CD4-positive, alpha-beta memory T cell (primary cell): ENCODE measurements at regions of chr17 and their contacts with region 1.

Region 1: GRCh38 chr17:74873038-74873873 is 462 bp upstream of the FDXR start:
- DNase-seq: peak; percentile 97 to 100 (median 99)
- H3K4me3 ChIP-seq: peak overlapping the region; percentile 79 to 84
- H3K4me3 Mint-ChIP-seq: peak overlapping the region; percentile 87 to 98 (median 94)
- H3K27ac ChIP-seq: peak overlapping the region; percentile 90
- H3K27ac Mint-ChIP-seq: peak overlapping the region; percentile 90 to 98 (median 98)
- H3K4me1 ChIP-seq: peaks cover 22% of the 10 kb centered on the region
- H3K4me1 Mint-ChIP-seq: peaks cover 10 to 27% (median 17%) of the 10 kb centered on the region in 4 donors
- H3K27me3 ChIP-seq: no peaks in the 10 kb centered on the region
- H3K27me3 Mint-ChIP-seq: no peaks in the 10 kb centered on the region

Region 2: GRCh38 chr17:74742153-74742515 is 131.1 kb before region 1 on chr17:
- CTCF ChIA-PET with region 1: interaction called, 6 read pairs
- POLR2A ChIA-PET with region 1: interaction called, 20 read pairs
- intact Hi-C with region 1: no loop called
- DNase-seq: peak in 4 of 5 donors; percentile 46 to 58 (median 57)
- H3K4me3 ChIP-seq: peak overlapping the region; percentile 20 to 30
- H3K4me3 Mint-ChIP-seq: peak overlapping the region; percentile 72 to 91 (median 79)
- H3K27ac ChIP-seq: peak overlapping the region; percentile 49
- H3K27ac Mint-ChIP-seq: peak overlapping the region in 6 of 7 donors; percentile 88 to 96 (median 90)
- H3K4me1 ChIP-seq: peaks cover 95% of the 10 kb centered on the region
- H3K4me1 Mint-ChIP-seq: peaks cover 54 to 95% (median 75%) of the 10 kb centered on the region in 4 donors
- H3K27me3 ChIP-seq: no peaks in the 10 kb centered on the region
- H3K27me3 Mint-ChIP-seq: no peaks in the 10 kb centered on the region

Region 3: DNA sequence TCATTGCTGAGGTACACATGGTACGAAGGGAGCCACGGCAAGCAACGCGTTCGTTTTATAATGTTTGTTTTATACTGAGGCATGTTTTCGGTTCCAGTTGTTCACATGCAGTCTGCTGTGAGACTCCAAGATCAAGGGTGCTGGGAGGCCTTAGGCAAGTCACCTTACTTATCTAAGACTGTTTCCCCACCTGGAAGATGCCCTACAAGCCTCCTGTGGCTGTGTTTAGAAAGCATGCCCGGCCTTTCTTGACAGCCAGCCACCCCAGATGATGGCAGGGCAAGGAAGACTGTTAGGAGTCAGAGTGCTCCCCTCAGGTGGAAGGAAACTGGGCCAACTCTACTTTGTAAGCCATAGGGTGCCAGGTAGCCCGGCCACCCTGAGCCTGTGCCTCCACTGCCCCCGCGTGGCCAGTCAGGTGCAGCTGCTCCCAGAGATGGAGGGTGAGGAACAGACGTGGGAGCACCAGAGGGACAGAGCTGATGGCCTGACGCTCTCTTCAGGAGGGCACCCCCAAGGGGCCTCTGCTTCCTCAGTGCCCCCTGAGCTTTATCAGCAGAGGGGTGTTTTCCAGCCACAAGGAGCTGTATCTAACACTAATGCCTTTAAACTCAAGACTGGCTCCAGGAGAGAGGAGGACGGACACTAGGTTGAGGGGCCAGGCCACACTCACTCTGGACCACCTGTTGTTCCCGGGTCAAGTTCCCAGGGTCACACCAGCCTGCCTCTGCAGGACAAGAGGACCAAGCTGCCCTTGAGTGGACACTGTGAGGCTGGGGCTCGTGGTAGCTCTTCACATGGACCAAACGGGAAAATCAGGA is 102.5 kb before region 1 on chr17:
- CTCF ChIA-PET with region 1: interaction called, 8 read pairs
- POLR2A ChIA-PET with region 1: interaction called, 12 read pairs
- intact Hi-C with region 1: no loop called
- DNase-seq: peak; percentile 79
- H3K4me3 ChIP-seq: no peak overlapping the region
- H3K4me3 Mint-ChIP-seq: peak overlapping the region in 3 of 8 donors; percentile 20 to 46 (median 24)
- H3K27ac ChIP-seq: peak overlapping the region; percentile 46
- H3K27ac Mint-ChIP-seq: peak overlapping the region; percentile 64 to 92 (median 89)
- H3K4me1 ChIP-seq: peaks cover 31% of the 10 kb centered on the region
- H3K4me1 Mint-ChIP-seq: peaks cover 21 to 67% (median 39%) of the 10 kb centered on the region in 4 donors
- H3K27me3 ChIP-seq: no peaks in the 10 kb centered on the region
- H3K27me3 Mint-ChIP-seq: no peaks in the 10 kb centered on the region

Region 4: DNA sequence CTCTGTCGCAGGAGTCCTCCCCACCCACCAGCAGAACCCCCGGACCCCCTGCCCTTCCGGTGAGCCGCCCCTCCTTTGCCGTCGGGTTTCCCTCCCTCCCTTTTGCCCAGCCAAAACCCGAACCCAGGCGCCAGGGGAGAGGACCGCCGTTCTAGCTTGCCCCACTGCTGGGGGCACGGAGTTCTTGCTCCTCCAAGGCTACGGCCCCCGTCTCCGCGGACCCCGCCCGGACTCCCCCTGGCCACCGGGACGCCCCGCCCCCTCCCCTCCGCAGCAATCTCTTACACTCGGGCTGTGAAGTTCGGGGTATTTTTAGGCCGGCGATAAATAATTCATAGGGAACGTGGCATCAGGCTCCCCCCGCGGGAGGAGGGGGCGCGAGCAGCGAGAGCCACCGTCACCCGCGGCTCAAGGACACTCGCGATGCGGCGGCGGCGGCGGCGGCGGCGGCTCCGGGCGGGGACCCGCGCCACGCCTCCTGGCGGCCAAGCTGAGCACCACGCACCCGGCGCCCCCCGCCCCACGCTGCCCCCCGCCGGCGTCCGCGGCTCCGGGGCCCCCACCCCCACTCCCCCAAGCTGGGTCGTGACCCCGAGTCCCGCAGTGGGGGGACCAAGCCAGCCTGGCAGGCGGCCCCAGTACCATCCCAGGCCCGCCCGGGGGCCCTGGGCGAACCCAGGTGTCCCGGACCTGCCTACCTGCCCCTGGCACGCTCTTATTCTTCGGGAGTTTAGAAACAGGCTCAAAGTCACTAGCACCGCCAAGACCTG is 13.6 kb before region 1 on chr17 and contains the start of gene GRIN2C:
- CTCF ChIA-PET with region 1: interaction called, 12 read pairs
- POLR2A ChIA-PET with region 1: interaction called, 15 read pairs
- intact Hi-C with region 1: no loop called
- DNase-seq: peak in 4 of 5 donors; percentile 27 to 44 (median 42)
- H3K4me3 ChIP-seq: no peak within 1 kb of the TSS
- H3K4me3 Mint-ChIP-seq: peak within 1 kb of the TSS; percentile 55 to 78 (median 74)
- H3K27ac ChIP-seq: no peak within 1 kb of the TSS
- H3K27ac Mint-ChIP-seq: peak within 1 kb of the TSS in 3 of 7 donors; percentile 13 to 45 (median 43)
- H3K4me1 ChIP-seq: peaks cover 27% of the 10 kb centered on the region
- H3K4me1 Mint-ChIP-seq: peaks cover 6 to 22% (median 11%) of the 10 kb centered on the region in 4 donors
- H3K27me3 ChIP-seq: peaks cover 37% of the 10 kb centered on the region
- H3K27me3 Mint-ChIP-seq: peaks cover 25 to 43% of the 10 kb centered on the region in 2 donors
- total RNA-seq, gene GRIN2C: 0.09 TPM in 1 of 2 experiments, not detected in the other

Region 5: DNA sequence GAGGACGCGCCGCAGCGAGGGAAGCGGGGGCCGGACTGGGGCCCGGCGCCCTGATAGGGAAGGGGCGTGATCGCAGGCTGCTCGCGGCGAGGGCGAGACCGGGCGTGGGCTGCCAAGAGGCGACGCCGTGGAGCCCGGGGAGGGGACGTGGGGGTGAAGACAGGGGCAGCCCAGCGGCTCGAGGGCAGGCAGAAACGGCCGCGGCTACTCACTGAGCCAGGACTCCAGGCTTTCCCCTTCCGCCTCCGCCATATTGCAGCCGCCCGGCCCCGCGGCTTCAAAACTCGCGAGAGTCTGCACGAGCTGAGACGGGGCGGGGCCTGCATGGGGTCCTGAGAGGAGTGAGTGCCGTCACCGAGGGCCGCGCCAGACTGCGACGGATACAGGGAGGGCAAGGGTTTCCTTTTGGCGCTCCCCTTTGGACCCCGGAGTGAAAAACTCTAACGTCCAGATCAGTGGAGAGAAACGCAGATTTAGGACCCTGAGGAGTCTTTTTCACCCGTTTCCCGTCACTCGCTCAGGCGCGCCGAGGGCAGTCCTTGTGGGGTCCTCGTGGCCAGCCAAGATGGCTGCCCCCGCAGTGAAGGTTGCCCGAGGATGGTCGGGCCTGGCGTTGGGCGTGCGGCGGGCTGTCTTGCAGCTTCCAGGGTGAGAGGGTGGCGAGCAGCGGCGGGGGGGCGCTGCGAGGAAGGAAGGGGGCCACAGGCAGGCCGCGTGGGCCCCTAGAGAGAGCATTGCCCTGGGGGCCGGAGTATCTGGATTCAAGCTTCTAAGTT is 388.3 kb after region 1 on chr17 and contains the starts of genes GGA3 and MRPS7:
- CTCF ChIA-PET with region 1: no interaction called
- POLR2A ChIA-PET with region 1: interaction called, 12 read pairs
- intact Hi-C with region 1: no loop called
- DNase-seq: peak; percentile 95 to 99 (median 97)
- H3K4me3 ChIP-seq: peak within 1 kb of the TSS; percentile 77 to 99
- H3K4me3 Mint-ChIP-seq: peak within 1 kb of the TSS; percentile 93 to 99 (median 97)
- H3K27ac ChIP-seq: peak within 1 kb of the TSS; percentile 96
- H3K27ac Mint-ChIP-seq: peak within 1 kb of the TSS; percentile 100
- H3K4me1 ChIP-seq: peaks cover 35% of the 10 kb centered on the region
- H3K4me1 Mint-ChIP-seq: peaks cover 32 to 65% (median 48%) of the 10 kb centered on the region in 4 donors
- H3K27me3 ChIP-seq: no peaks in the 10 kb centered on the region
- H3K27me3 Mint-ChIP-seq: no peaks in the 10 kb centered on the region
- total RNA-seq, gene GGA3: 121 to 122 TPM
- total RNA-seq, gene MRPS7: 34.1 to 36.3 TPM